Ovary (tissue), 10 donors: ENCODE measurements at regions of chr4 and their contacts with region 1.

Region 1: DNA sequence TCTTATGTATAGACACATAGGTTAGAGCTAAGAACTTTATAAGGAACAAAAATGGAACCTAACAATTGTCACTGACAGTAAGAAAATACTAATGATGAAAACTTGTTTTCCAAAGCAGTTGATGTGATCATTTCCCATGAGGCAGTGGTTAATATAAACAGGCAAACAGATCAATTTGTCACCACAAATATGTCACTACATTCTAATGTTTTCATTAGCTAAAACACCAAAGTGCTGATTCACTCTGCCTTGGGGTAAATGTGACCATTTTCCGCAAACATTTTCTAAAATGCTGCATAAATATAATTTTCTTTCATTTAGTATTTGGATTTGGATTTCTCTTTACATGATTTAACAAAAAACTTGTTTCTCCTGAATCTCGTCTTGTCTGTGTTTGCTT is 408.9 kb upstream of the CTSO start:
- DNase-seq: no peak
- H3K4me3 ChIP-seq: no peak overlapping the region
- H3K27ac ChIP-seq: no peak overlapping the region
- H3K4me1 ChIP-seq: no peaks in the 10 kb centered on the region
- H3K27me3 ChIP-seq: no peaks in the 10 kb centered on the region
- CTCF ChIP-seq: no peak
- EP300 ChIP-seq: no peak
- POLR2A ChIP-seq: no peak

Region 2: GRCh38 chr4:154497889-154498288 is 1864.7 kb before region 1 on chr4:
- intact Hi-C with region 1: loop called in 1 of 4 experiments (anchors 5 kb)
- DNase-seq: no peak
- H3K4me3 ChIP-seq: no peak overlapping the region
- H3K27ac ChIP-seq: no peak overlapping the region
- H3K4me1 ChIP-seq: no peaks in the 10 kb centered on the region
- H3K27me3 ChIP-seq: no peaks in the 10 kb centered on the region
- CTCF ChIP-seq: no peak
- EP300 ChIP-seq: no peak
- POLR2A ChIP-seq: no peak